ENCODE measurements at regions of chr10 and their contacts with region 1.

Region 1: DNA sequence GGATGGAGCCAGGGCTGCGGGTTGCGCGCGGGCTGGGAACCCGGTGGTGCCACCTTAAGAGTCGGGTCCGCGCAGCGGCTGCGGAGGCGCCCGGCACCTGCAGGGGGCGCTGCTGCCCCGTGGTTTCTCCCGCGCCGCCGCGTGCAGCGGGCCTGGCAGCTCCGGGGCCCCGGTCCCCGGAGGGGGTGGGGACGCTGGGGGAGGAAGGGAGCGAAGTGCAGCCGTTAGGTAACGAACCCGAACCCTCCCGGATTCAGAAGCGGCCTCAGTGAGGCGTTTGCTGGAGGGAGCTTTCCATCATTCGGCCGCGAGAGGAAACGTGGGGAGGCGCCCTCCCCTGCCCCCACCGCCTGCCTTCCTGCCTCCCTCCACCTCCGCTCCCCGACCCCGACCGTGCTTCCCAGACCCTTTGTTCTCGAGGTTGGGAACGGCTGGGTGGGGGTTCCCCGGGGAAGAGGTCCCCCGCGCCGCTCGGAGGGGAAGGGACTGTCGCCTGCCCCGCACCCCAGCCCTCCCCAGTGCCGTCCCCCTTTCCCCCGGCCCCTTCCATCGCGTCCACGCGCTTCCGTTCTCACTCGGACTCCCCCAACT is 29.6 kb downstream of the SKIDA1 start:
- DNase-seq: peak; percentile 86
- H3K4me3 ChIP-seq: peak overlapping the region; percentile 50 to 83 (median 66)
- H3K27ac ChIP-seq: peak overlapping the region; percentile 73 to 81 (median 74)
- H3K4me1 ChIP-seq: peaks cover 0 to 45% (median 20%) of the 10 kb centered on the region in 4 donors
- H3K27me3 ChIP-seq: no peaks in the 10 kb centered on the region
- CTCF ChIP-seq: peak; percentile 52 to 96 (median 88)
- EP300 ChIP-seq: no peak
- POLR2A ChIP-seq: no peak

Region 2: DNA sequence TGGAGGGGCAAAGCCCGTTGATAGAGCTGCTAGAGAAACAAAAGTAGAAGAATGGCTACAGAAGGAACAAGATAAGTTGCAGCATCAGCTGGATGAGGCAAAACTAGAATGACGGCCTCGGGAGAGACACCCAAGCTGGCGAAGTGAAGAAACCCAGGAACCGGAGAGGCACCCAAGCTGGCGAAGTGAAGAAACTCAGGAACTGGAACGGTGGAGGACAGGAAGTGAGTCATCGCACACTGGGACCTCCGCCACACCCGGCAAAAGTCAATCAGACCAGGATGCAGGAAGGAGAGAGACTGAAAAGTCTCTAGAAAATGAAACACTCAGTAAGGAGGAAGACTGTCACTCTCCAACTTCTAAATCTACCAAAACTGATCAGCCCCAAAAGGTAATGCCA is 465.8 kb before region 1 on chr10:
- intact Hi-C with region 1: no loop called
- DNase-seq: no peak
- H3K4me3 ChIP-seq: no peak overlapping the region
- H3K27ac ChIP-seq: no peak overlapping the region
- H3K4me1 ChIP-seq: no peaks in the 10 kb centered on the region
- H3K27me3 ChIP-seq: no peaks in the 10 kb centered on the region
- CTCF ChIP-seq: no peak
- EP300 ChIP-seq: no peak
- POLR2A ChIP-seq: no peak

Region 3: GRCh38 chr10:21278491-21279239 is 217.2 kb before region 1 on chr10:
- intact Hi-C with region 1: loop called (anchors 10 kb)
- DNase-seq: peak; percentile 88
- H3K4me3 ChIP-seq: no peak overlapping the region
- H3K27ac ChIP-seq: no peak overlapping the region
- H3K4me1 ChIP-seq: no peaks in the 10 kb centered on the region
- H3K27me3 ChIP-seq: no peaks in the 10 kb centered on the region
- CTCF ChIP-seq: peak in 3 of 4 experiments; percentile 41 to 59 (median 49)
- EP300 ChIP-seq: no peak
- POLR2A ChIP-seq: no peak

Region 4: DNA sequence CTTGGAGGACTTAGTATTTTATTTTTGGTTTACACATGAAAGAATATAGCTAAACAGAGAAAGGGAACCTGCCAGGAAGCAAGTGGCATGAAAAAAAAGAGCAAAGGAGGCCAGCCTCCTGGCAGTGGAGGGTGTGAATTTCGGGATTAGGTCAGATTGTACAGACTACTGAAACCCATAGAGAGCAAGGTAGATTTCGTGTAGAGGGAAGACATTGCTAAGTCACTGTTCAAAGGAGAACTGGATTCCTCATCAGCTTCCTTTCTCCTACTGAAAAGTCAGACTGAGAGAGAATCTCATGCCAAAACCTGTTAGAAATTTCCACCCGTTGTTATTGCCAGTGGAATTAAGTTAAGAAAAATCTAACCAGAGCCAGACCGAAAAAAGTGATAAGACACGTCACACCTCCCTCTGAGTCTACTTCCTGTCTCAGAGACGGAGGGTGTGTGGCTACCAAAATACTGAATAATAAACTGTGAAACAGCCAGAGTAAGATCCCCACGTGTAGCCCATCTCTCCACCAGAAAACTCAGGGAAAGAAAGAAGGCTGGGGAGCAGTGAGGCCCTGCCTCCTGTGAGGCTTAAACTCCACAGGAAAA is 89.2 kb before region 1 on chr10:
- intact Hi-C with region 1: no loop called
- DNase-seq: no peak
- H3K4me3 ChIP-seq: no peak overlapping the region
- H3K27ac ChIP-seq: no peak overlapping the region
- H3K4me1 ChIP-seq: peaks cover 0 to 7% (median 3%) of the 10 kb centered on the region in 4 donors
- H3K27me3 ChIP-seq: no peaks in the 10 kb centered on the region
- CTCF ChIP-seq: no peak
- EP300 ChIP-seq: no peak
- POLR2A ChIP-seq: no peak

Region 5: DNA sequence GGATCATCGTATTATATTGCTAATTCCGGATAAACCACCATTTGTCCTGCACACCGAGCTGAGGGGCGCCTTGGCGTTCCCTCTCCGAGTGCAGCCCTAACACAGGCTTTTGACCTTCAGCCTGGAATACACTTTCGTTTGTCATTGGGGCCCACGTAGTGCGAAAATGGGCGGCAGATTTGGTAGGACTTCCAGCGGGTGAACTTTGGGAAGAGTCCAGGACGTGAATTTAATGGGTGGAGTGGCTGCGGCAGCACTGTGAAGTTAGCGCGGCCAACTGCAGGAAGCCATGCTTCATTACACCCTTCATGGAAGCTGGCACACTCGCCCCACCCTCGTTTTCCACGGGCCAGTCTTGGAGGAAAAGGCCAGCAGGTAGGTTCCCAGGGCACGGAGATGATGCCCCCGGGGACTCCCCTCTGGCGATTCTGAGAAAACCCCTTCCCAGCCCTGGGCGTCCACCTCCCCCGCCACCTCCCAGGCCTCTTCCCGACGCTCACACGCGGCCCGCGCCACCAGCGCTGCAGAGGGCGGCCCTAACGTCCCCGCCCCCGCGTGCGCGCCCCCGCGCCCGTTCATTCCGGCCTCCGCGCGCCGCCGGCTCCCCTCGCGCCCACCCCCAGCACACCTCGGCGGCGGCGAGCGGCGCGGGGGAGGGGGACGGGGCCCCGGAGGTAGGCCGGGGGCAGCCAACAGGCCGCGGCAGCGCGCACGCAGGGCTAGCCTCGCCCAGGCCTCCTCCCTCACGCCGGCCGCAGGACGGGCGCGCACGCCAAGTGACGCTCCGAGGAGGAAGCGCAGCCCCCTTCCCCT is 37.8 kb after region 1 on chr10 and contains the start of gene MLLT10:
- intact Hi-C with region 1: loop called (anchors 2 kb)
- DNase-seq: peak; percentile 97
- H3K4me3 ChIP-seq: peak within 1 kb of the TSS; percentile 66 to 93 (median 92)
- H3K27ac ChIP-seq: peak within 1 kb of the TSS; percentile 95 to 99 (median 97)
- H3K4me1 ChIP-seq: peaks cover 0 to 56% (median 26%) of the 10 kb centered on the region in 4 donors
- H3K27me3 ChIP-seq: no peaks in the 10 kb centered on the region
- CTCF ChIP-seq: peak in 3 of 4 experiments; percentile 38 to 69 (median 55)
- EP300 ChIP-seq: no peak
- POLR2A ChIP-seq: peak; percentile 59 to 76
- total RNA-seq, gene MLLT10: 36.0 to 53.7 (median 45.1) TPM

Region 6: GRCh38 chr10:21724695-21725367 is 229.0 kb after region 1 on chr10:
- intact Hi-C with region 1: loop called (anchors 2 kb)
- DNase-seq: peak; percentile 97
- H3K4me3 ChIP-seq: no peak overlapping the region
- H3K27ac ChIP-seq: peak overlapping the region in 3 of 4 donors; percentile 10 to 60 (median 44)
- H3K4me1 ChIP-seq: peaks cover 0 to 28% (median 24%) of the 10 kb centered on the region in 4 donors
- H3K27me3 ChIP-seq: no peaks in the 10 kb centered on the region
- CTCF ChIP-seq: no peak
- EP300 ChIP-seq: no peak
- POLR2A ChIP-seq: no peak

Region 7: GRCh38 chr10:21953585-21954057 is 457.8 kb after region 1 on chr10:
- intact Hi-C with region 1: loop called (anchors 10 kb)
- DNase-seq: no peak
- H3K4me3 ChIP-seq: no peak overlapping the region
- H3K27ac ChIP-seq: no peak overlapping the region
- H3K4me1 ChIP-seq: peaks cover 0 to 12% (median 2%) of the 10 kb centered on the region in 4 donors
- H3K27me3 ChIP-seq: no peaks in the 10 kb centered on the region
- CTCF ChIP-seq: no peak
- EP300 ChIP-seq: no peak
- POLR2A ChIP-seq: no peak

Region 8: DNA sequence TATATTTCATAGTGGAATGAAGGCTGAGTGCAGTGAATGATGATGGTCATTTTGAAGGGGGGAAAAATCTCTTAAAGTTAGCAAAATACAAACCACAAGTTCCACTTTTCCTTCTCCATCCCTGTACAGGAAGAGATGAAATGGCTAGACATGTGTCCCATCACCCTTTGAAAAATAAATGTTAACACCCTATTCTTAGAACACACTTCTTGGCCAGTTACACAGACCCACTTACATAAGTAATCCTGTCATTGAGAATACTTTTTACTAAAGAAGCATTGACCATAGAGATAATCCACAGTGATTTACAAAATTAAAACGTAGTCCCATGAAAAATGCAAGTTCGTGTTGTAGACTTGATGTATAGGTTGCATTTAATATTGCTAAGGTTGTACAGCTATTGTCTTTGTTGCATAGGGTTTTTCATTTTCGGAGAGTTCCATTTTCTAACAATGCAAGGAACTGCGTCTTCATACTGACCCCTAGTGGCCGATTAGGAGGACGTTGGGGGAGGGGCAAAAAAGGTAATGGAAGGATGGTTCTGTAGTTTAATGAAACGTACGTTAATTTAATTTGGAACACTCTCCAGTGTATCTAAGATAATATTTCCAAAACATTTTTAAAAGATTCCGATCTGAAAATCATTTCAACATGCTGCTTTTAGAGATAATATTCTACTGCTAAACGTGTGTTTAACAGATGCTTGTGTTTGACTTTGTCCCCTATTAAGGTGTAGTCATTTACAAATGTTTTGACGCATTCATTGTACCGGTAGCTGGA is 1492.9 kb after region 1 on chr10:
- intact Hi-C with region 1: loop called (anchors 5 kb)
- DNase-seq: peak; percentile 73
- H3K4me3 ChIP-seq: no peak overlapping the region
- H3K27ac ChIP-seq: no peak overlapping the region
- H3K4me1 ChIP-seq: peaks cover 0 to 11% (median 4%) of the 10 kb centered on the region in 4 donors
- H3K27me3 ChIP-seq: no peaks in the 10 kb centered on the region
- CTCF ChIP-seq: peak; percentile 78 to 89 (median 85)
- EP300 ChIP-seq: no peak
- POLR2A ChIP-seq: no peak